AG04450 (cell line): ENCODE measurements at regions of chr11 and their contacts with region 1.

Region 1: DNA sequence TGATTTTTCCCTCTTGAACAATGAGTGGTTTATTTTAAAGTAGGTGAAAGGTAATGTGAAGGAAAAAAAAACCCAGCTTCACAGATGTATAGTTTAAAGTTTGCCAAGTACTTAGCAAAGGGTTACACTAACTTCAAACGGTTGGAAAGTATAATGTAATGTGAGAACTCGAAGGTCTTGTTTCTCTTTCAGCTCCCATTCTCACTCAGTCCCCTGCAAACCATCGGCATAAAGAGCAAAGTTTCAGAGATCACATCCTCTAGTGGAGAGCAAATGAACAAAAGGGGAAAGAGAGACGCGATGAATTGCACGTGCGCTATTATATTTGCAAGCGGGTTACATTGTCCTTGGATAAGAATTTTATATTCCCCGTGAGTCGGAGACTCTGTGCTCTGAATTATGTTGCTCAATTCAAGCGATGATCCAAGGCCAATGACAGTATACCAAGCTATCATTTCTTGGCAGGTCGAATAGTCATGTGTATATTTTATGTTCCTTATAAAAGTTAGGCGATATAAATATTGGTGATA is 37.6 kb upstream of the BIRC3 start:
- DNase-seq: peak; percentile 34
- H3K4me3 ChIP-seq: peak overlapping the region; percentile 29
- H3K27ac ChIP-seq: peak overlapping the region; percentile 12
- H3K27me3 ChIP-seq: no peaks in the 10 kb centered on the region
- CTCF ChIP-seq: peak; percentile 66

Region 2: GRCh38 chr11:102244681-102245409 is 34.9 kb before region 1 on chr11:
- CTCF ChIA-PET with region 1: interaction called, 10 read pairs
- POLR2A ChIA-PET with region 1: no interaction called
- DNase-seq: no peak
- H3K4me3 ChIP-seq: no peak overlapping the region
- H3K27ac ChIP-seq: no peak overlapping the region
- H3K27me3 ChIP-seq: no peaks in the 10 kb centered on the region
- CTCF ChIP-seq: no peak

Region 3: GRCh38 chr11:102268329-102269193 is 11.1 kb before region 1 on chr11:
- CTCF ChIA-PET with region 1: interaction called, 14 read pairs
- POLR2A ChIA-PET with region 1: no interaction called
- DNase-seq: no peak
- H3K4me3 ChIP-seq: peak overlapping the region; percentile 62
- H3K27ac ChIP-seq: peak overlapping the region; percentile 57
- H3K27me3 ChIP-seq: no peaks in the 10 kb centered on the region
- CTCF ChIP-seq: peak; percentile 38

Region 4: DNA sequence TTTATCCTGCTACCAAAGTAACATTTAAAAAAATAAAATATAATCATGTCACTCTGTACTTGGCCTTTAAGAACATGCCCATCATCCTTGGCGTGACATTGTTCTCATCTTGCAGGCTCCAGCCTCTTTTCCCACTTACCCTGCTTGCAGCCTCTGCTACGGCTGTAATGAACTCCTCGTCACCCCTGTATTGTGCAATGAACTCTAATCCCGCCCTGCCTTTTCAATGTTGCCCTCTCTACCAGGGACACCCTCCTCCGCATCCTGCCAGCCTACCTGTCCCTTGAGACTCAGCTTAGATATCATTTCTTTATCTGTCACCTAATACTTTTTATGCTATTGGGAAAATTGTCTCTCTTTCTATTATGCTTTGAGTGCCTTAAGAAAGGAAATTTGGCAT is 358.0 kb after region 1 on chr11:
- CTCF ChIA-PET with region 1: no interaction called
- POLR2A ChIA-PET with region 1: no interaction called
- DNase-seq: no peak
- H3K4me3 ChIP-seq: no peak overlapping the region
- H3K27ac ChIP-seq: no peak overlapping the region
- H3K27me3 ChIP-seq: no peaks in the 10 kb centered on the region
- CTCF ChIP-seq: no peak